Ascending aorta (tissue), 2 donors: ENCODE measurements at regions of chr19 and their contacts with region 1.

Region 1: GRCh38 chr19:45405435-45406225 is 761 bp upstream of the PPP1R13L start:
- DNase-seq: peak; percentile 71 to 94
- H3K4me3 ChIP-seq: peak overlapping the region; percentile 68 to 86
- H3K27ac ChIP-seq: peak overlapping the region; percentile 93 to 97
- H3K4me1 ChIP-seq: peaks cover 8 to 28% of the 10 kb centered on the region in 2 donors
- H3K27me3 ChIP-seq: no peaks in the 10 kb centered on the region
- CTCF ChIP-seq: no peak

Region 2: GRCh38 chr19:44557933-44558332 is 847.7 kb before region 1 on chr19:
- intact Hi-C with region 1: no loop called
- DNase-seq: no peak
- H3K4me3 ChIP-seq: no peak overlapping the region
- H3K27ac ChIP-seq: no peak overlapping the region
- H3K4me1 ChIP-seq: no peaks in the 10 kb centered on the region
- H3K27me3 ChIP-seq: no peaks in the 10 kb centered on the region
- CTCF ChIP-seq: no peak

Region 3: GRCh38 chr19:45323671-45324081 is 82.0 kb before region 1 on chr19:
- intact Hi-C with region 1: no loop called
- DNase-seq: no peak
- H3K4me3 ChIP-seq: peak overlapping the region in 1 of 2 donors; percentile 44
- H3K27ac ChIP-seq: no peak overlapping the region
- H3K4me1 ChIP-seq: peaks cover 0 to 9% of the 10 kb centered on the region in 2 donors
- H3K27me3 ChIP-seq: peaks cover 7% of the 10 kb centered on the region
- CTCF ChIP-seq: no peak

Region 4: DNA sequence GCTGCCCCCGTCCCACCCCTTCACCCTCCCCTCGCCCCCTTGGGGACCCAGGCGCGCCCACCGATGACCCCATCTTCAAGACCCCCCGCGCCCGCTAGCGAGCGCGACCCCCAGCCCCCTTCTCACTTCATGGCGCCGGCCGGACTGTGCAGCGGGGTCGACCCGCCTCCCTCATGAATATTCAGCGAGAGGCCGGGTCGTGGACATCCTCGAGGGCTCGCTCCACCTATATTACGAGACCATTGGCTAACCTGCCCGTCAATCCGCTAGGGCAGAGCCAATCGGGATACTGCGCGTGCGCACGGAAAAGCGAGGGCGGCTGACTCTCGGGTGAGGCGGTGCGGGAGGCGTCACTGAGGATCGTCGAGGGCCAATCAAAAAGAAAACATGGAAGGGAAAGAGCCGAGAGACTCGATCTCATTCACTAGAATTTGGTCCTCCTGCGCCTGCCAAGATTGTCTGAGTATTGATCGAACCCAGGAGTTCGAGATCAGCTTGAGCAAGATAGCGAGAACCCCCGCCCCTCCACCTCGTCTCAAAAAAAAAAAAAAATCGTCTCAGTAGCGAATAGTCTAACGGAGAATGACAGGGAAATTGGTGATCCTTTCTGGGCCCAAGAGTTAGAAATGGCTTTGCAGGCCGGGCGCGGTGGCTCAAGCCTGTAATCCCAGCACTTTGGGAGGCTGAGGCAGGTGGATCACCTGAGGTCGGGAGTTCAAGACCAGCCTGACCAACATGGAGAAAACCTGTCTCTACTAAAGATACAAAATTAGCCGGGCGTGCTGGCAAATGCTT is 35.0 kb before region 1 on chr19 and contains the start of gene ERCC2:
- intact Hi-C with region 1: loop called (anchors 2 kb)
- DNase-seq: peak; percentile 96 to 99
- H3K4me3 ChIP-seq: peak within 1 kb of the TSS; percentile 80 to 84
- H3K27ac ChIP-seq: peak within 1 kb of the TSS; percentile 65 to 69
- H3K4me1 ChIP-seq: peaks cover 0 to 8% of the 10 kb centered on the region in 2 donors
- H3K27me3 ChIP-seq: no peaks in the 10 kb centered on the region
- CTCF ChIP-seq: no peak
- total RNA-seq, gene ERCC2: 22.4 TPM

Region 5: GRCh38 chr19:45423589-45424190 is 18.1 kb after region 1 on chr19 and contains the start of gene ERCC1:
- intact Hi-C with region 1: loop called (anchors 1 kb)
- DNase-seq: peak; percentile 76 to 98
- H3K4me3 ChIP-seq: peak within 1 kb of the TSS; percentile 69 to 85
- H3K27ac ChIP-seq: peak within 1 kb of the TSS; percentile 89 to 95
- H3K4me1 ChIP-seq: peaks cover 0 to 32% of the 10 kb centered on the region in 2 donors
- H3K27me3 ChIP-seq: no peaks in the 10 kb centered on the region
- CTCF ChIP-seq: no peak
- total RNA-seq, gene ERCC1: 142 TPM

Region 6: GRCh38 chr19:45485305-45486077 is 79.9 kb after region 1 on chr19:
- intact Hi-C with region 1: loop called (anchors 1 kb)
- DNase-seq: peak; percentile 95 to 99
- H3K4me3 ChIP-seq: peak overlapping the region; percentile 62 to 75
- H3K27ac ChIP-seq: peak overlapping the region; percentile 84 to 91
- H3K4me1 ChIP-seq: peaks cover 0 to 2% of the 10 kb centered on the region in 2 donors
- H3K27me3 ChIP-seq: no peaks in the 10 kb centered on the region
- CTCF ChIP-seq: peak; percentile 81 to 84 (median 83)